PC-3 (cell line): ENCODE measurements at regions of chr1 and their contacts with region 1.

Region 1: GRCh38 chr1:28354121-28354520 is 15.4 kb upstream of the PHACTR4 start:
- DNase-seq: peak; percentile 81
- ATAC-seq: peak; percentile 49; the same call in 1 of the 2 replicates
- H3K4me3 ChIP-seq: no peak overlapping the region
- H3K27ac ChIP-seq: peak overlapping the region; percentile 5; the same call in 1 of the 2 replicates
- H3K4me1 ChIP-seq: peaks cover 32% of the 10 kb centered on the region
- H3K27me3 ChIP-seq: no peaks in the 10 kb centered on the region
- CTCF ChIP-seq: no peak

Region 2: DNA sequence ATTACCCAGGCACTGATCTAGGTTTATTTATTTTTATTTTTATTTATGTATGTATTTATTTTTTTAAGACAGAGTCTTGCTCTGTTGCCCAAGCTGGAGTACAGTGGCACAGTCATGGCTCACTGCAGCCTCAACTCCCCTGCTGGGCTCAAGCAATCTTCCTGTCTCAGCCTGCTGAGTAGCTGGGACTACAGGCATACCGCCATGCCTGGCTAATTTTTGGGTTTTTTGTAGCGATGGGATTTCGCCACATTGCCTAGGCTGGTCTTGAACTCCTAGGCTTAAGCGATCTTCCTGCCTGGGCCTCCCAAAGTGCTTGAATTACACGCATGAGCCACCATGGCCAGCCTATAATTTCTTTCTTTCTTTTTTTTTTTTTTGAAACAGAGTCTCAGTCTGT is 24.8 kb after region 1 on chr1:
- CTCF ChIA-PET with region 1: no interaction called
- POLR2A ChIA-PET with region 1: interaction called, 12 read pairs
- intact Hi-C with region 1: no loop called
- DNase-seq: no peak
- ATAC-seq: no peak
- H3K4me3 ChIP-seq: no peak overlapping the region
- H3K27ac ChIP-seq: no peak overlapping the region
- H3K4me1 ChIP-seq: peaks cover 4% of the 10 kb centered on the region
- H3K27me3 ChIP-seq: no peaks in the 10 kb centered on the region
- CTCF ChIP-seq: no peak